H1 (cell line): ENCODE measurements at regions of chr12 and their contacts with region 1.

Region 1: GRCh38 chr12:51970904-51971646 is 19.6 kb downstream of the ACVR1B start:
- DNase-seq: peak in 1 of 2 experiments; percentile 62
- H3K4me3 ChIP-seq: no peak overlapping the region
- H3K27ac ChIP-seq: no peak overlapping the region
- H3K4me1 ChIP-seq: peaks cover 3 to 10% (median 6%) of the 10 kb centered on the region in 4 experiments; a peak in 5 of 7 replicates
- H3K27me3 ChIP-seq: no peaks in the 10 kb centered on the region
- CTCF ChIP-seq: peak; percentile 85 to 97 (median 95)
- EP300 ChIP-seq: no peak
- POLR2A ChIP-seq: no peak
- RAD21 ChIP-seq: peak; percentile 34 to 50

Region 2: DNA sequence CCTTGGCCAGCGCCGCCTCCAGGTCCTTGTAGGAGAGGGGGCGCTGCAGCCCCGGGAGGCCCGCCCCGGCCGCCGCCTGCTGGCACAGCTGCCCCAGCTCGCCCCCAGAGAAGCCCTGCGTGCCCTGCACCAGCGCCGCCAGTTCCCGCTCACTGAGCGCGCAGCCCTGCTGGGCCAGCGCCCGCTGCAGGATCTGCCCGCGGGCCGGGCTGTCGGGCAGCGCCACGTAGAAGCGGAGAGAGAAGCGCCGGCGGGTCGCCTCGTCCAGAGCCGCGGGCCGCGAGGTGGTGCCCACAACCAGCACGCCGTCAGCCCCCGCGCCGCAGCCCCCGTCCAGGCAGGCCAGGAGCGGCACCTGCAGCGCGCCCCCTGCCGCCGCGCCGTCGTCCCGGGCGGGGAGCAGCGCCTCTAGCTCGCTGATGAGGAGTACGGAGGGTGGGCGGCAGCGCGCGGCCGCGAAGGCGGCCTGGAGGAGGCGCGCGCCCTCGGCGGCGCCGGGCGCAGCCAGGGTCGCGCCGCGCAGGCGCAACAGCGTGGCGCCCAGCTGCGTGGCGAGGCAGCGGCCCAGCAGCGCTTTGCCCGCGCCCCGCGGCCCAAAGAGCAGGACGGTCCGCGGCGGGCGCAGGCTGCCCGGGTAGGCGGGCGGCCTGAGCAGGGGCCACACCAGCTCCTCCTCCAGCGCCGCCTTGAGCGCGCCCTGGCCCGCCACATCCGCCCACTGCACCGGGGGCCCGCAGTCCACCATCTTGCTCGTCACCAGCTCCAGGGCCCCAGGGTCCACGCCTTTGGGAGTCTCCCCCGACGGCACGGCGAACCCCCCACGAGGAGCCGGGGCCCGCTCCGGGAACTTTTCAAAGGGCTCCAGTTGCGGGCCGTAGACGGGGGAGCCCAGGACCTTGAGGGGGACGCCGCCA is 150.3 kb before region 1 on chr12:
- CTCF ChIA-PET with region 1: no interaction called
- POLR2A ChIA-PET with region 1: no interaction called
- DNase-seq: peak in 1 of 2 experiments; percentile 86
- H3K4me3 ChIP-seq: peak overlapping the region; percentile 63 to 80 (median 76)
- H3K27ac ChIP-seq: peak overlapping the region; percentile 70; the same call in 1 of the 2 replicates
- H3K4me1 ChIP-seq: peaks cover 0 to 11% (median 8%) of the 10 kb centered on the region in 4 experiments; a peak in 6 of 7 replicates
- H3K27me3 ChIP-seq: peaks cover 0 to 27% (median 23%) of the 10 kb centered on the region in 4 experiments; a peak in 5 of 7 replicates
- CTCF ChIP-seq: peak; percentile 31 to 64 (median 52)
- EP300 ChIP-seq: no peak
- POLR2A ChIP-seq: peak; percentile 35 to 70; a peak in 2 of 3 replicates
- RAD21 ChIP-seq: peak in 1 of 2 experiments; percentile 26; a peak in 1 of 4 replicates

Region 3: GRCh38 chr12:51932218-51933076 is 38.6 kb before region 1 on chr12:
- CTCF ChIA-PET with region 1: interaction called, 47 read pairs
- POLR2A ChIA-PET with region 1: no interaction called
- DNase-seq: no peak
- H3K4me3 ChIP-seq: no peak overlapping the region
- H3K27ac ChIP-seq: no peak overlapping the region
- H3K4me1 ChIP-seq: no peaks in the 10 kb centered on the region
- H3K27me3 ChIP-seq: no peaks in the 10 kb centered on the region
- CTCF ChIP-seq: no peak
- EP300 ChIP-seq: no peak
- POLR2A ChIP-seq: no peak
- RAD21 ChIP-seq: no peak

Region 4: DNA sequence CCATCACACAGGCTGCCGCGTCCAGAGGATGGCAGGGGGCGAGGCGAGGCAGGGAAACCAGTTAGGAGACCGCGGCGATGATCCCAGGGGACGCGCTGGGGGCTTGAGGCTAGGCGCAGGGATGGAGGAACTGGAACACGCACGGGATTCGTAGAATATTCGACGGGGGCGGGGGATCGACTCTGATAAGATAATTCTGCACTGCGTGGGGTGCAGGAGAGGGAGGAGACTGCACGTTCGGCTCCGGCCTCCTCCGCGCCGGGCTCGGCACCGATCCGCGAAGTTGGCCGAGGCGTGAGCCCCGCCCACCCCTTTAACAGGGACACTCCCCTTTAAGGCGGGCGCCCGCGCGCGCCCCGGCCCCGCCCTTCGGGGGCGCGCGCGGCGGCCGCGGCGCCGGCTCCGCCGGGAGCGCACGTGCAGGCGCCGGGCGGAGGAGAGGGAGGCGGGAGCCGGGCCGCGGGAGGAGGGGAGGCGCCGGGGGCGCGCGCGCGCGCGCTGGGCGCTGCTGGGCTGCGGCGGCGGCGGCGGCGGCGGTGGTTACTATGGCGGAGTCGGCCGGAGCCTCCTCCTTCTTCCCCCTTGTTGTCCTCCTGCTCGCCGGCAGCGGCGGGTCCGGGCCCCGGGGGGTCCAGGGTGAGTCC is 19.8 kb before region 1 on chr12 and contains the start of gene ACVR1B:
- CTCF ChIA-PET with region 1: interaction called, 10 read pairs
- POLR2A ChIA-PET with region 1: interaction called, 4 read pairs
- DNase-seq: peak in 1 of 2 experiments; percentile 87
- H3K4me3 ChIP-seq: peak within 1 kb of the TSS; percentile 73 to 95 (median 90)
- H3K27ac ChIP-seq: peak within 1 kb of the TSS; percentile 52; the same call in 1 of the 2 replicates
- H3K4me1 ChIP-seq: peaks cover 0 to 3% (median 2%) of the 10 kb centered on the region in 4 experiments; a peak in 6 of 7 replicates
- H3K27me3 ChIP-seq: peaks cover 7 to 47% (median 34%) of the 10 kb centered on the region in 4 experiments
- CTCF ChIP-seq: no peak
- EP300 ChIP-seq: no peak
- POLR2A ChIP-seq: peak in 1 of 2 experiments; percentile 1; a peak in 1 of 3 replicates
- RAD21 ChIP-seq: no peak
- total RNA-seq, gene ACVR1B: 13.5 and 16.0 TPM in 2 replicates

Region 5: DNA sequence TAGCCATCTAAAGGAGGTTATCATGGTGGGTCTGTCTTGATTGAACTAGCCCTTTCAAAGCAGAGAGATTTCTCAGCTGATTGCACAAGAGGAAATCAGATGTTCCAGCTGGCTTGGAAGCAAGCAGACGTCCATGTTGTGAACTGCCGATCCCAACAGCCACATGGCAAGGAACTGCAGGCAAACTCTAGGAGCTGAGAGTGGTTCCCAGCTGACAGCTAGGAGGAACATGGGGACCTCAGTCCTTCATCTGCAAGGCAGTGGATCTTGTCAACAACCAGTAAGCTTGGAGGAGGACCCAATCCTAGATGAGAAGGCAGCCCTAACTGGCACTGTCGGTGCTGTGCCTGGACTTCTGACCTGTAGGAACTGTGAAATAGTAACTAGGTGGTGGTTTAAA is 11.9 kb before region 1 on chr12:
- CTCF ChIA-PET with region 1: interaction called, 40 read pairs
- POLR2A ChIA-PET with region 1: interaction called, 4 read pairs
- DNase-seq: no peak
- H3K4me3 ChIP-seq: no peak overlapping the region
- H3K27ac ChIP-seq: no peak overlapping the region
- H3K4me1 ChIP-seq: no peaks in the 10 kb centered on the region
- H3K27me3 ChIP-seq: no peaks in the 10 kb centered on the region
- CTCF ChIP-seq: no peak
- EP300 ChIP-seq: no peak
- POLR2A ChIP-seq: no peak
- RAD21 ChIP-seq: no peak